ENCODE measurements at regions of chr1 and their contacts with region 1.

Region 1: DNA sequence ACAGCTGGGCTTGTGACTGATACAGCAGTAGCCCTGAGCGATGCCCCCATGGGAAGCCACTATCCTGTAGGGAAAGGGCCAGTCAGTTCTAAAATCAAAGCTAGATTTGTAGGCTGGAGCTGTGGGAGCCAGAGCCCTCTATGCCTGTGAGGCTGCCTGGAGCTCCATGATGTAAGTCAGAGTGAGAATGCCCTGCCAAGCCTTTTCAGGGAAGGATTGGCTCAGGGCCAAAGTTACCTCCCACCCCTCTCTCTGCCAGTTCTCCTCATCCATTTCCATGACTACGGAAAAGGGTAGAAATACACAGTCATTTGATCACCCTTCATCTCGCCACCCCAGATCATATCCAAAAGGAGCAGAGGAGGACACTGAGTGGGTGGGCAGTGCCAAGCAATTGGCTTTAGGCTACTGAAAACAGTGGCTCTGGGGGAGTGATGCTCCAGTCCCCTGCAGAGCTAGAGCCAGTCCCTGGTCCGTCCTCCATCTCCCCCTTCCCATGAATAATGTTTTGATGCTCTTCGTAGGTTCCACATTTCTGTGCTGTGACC is 59.5 kb upstream of the KCNA3 start:
- DNase-seq: no peak
- H3K4me3 ChIP-seq: no peak overlapping the region
- H3K27ac ChIP-seq: no peak overlapping the region
- H3K4me1 ChIP-seq: no peaks in the 10 kb centered on the region
- H3K27me3 ChIP-seq: no peaks in the 10 kb centered on the region
- CTCF ChIP-seq: no peak
- POLR2A ChIP-seq: no peak

Region 2: GRCh38 chr1:110771628-110772027 is 37.4 kb after region 1 on chr1:
- intact Hi-C with region 1: loop called (anchors 2 kb)
- DNase-seq: no peak
- H3K4me3 ChIP-seq: no peak overlapping the region
- H3K27ac ChIP-seq: no peak overlapping the region
- H3K4me1 ChIP-seq: no peaks in the 10 kb centered on the region
- H3K27me3 ChIP-seq: no peaks in the 10 kb centered on the region
- CTCF ChIP-seq: no peak
- POLR2A ChIP-seq: no peak